Cardiac septum (tissue), 1 donor: ENCODE measurements at regions of chr4 and their contacts with region 1.

Region 1: DNA sequence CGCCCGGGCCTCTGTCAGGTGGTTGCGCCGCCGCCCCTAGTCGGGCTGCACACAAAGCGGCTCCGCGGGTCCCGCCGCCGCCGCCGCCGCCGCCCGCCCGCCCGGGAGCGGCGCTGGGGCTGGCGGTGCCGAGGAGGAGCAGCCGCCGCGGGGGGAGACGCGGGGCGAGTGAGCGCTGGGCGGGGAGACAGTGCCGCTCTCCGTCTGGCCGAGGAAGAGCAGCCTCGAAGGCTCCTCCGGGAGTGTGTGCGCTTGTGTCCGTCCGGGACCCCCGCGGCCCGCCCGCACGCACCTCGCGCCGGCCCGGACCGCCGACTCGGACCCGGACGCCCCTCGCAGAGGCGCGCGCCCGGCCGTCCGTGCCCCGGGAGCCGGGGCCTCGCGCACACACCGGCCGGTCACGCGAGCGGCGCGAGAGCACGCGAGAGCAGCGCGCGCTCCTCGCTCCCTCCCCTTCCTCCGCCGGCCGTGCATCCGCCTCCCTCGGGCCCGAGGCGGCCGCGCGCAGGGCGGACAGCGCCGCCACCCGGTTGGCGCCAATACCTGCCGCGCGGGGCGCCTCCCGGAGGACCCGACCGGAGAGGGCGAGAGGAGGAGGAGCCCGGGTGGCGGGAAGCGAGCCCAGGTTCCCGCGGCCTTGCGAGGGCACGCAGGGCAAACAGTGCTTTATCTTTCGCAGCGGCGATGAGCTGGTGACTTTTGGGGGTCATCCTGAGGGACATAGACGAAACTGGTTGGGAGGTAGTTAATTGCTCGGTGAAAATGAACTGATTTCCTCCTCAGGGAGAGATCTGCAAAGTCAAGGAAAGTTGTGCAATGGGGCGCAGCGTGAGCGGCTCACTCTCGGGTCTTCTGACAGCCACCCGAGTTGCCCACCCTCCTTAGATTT is at the start of gene PDS5A:
- DNase-seq: peak; percentile 95
- total RNA-seq, gene PDS5A: 33.1 TPM

Region 2: GRCh38 chr4:39469429-39470077 is 508.2 kb before region 1 on chr4:
- intact Hi-C with region 1: loop called (anchors 2 kb)
- DNase-seq: no peak

Region 3: GRCh38 chr4:39682138-39682537 is 295.6 kb before region 1 on chr4:
- intact Hi-C with region 1: no loop called
- DNase-seq: no peak

Region 4: GRCh38 chr4:39697740-39698423 is 279.9 kb before region 1 on chr4 and contains the start of gene UBE2K:
- intact Hi-C with region 1: loop called (anchors 1 kb)
- DNase-seq: peak; percentile 94
- total RNA-seq, gene UBE2K: 57.0 TPM

Region 5: GRCh38 chr4:39922389-39922788 is 55.3 kb before region 1 on chr4:
- intact Hi-C with region 1: loop called (anchors 5 kb)
- DNase-seq: no peak